H1 (cell line): ENCODE measurements at regions of chr5 and their contacts with region 1.

Region 1: DNA sequence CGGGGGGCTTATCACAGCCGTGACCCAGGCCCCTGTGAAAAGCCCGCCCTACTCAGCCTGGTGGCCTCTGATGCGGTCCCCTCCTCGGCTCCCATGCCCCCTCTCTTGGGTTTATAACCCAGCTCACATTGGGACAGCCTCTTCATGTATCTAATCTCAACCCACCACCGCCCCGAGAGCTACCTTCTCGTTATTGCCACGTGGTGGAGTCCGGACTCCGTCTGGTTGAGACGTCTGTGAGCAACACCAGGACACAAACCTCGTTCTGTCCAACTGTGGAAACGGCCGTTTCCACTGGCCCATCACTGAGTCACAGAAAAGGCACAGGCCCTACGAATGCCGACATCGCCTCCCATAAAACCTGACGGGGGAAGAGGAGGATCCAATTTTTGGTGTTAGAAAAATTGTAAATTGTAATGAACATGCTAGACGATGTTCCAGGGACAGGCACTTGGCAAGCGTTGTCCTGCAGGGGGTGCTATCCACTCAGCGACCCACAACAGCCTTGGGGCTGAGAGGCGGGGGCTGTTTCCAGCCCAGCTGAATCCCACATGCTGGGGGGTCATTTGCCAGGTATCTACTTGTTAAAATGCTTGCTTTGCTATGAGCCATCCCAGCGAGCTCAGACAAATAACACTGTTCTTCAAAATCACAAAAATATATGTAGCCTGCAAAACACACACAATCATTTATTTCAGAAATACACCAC is 37.3 kb upstream of the N4BP3 start:
- DNase-seq: peak; percentile 50 to 92
- H3K4me3 ChIP-seq: peak overlapping the region in 1 of 4 experiments; percentile 33; a peak in 2 of 8 replicates
- H3K27ac ChIP-seq: no peak overlapping the region
- H3K4me1 ChIP-seq: peaks cover 0 to 12% (median 4%) of the 10 kb centered on the region in 4 experiments; a peak in 2 of 7 replicates
- H3K27me3 ChIP-seq: peaks cover 0 to 11% (median 6%) of the 10 kb centered on the region in 4 experiments; a peak in 3 of 7 replicates
- CTCF ChIP-seq: peak in 2 of 3 experiments; percentile 87 to 93; a peak in 3 of 4 replicates
- EP300 ChIP-seq: no peak
- POLR2A ChIP-seq: no peak
- RAD21 ChIP-seq: peak; percentile 94 to 96

Region 2: GRCh38 chr5:178058321-178059012 is 17.5 kb before region 1 on chr5:
- CTCF ChIA-PET with region 1: interaction called, 19 read pairs
- POLR2A ChIA-PET with region 1: no interaction called
- DNase-seq: no peak
- H3K4me3 ChIP-seq: no peak overlapping the region
- H3K27ac ChIP-seq: no peak overlapping the region
- H3K4me1 ChIP-seq: no peaks in the 10 kb centered on the region
- H3K27me3 ChIP-seq: no peaks in the 10 kb centered on the region
- CTCF ChIP-seq: no peak
- EP300 ChIP-seq: no peak
- POLR2A ChIP-seq: no peak
- RAD21 ChIP-seq: no peak

Region 3: DNA sequence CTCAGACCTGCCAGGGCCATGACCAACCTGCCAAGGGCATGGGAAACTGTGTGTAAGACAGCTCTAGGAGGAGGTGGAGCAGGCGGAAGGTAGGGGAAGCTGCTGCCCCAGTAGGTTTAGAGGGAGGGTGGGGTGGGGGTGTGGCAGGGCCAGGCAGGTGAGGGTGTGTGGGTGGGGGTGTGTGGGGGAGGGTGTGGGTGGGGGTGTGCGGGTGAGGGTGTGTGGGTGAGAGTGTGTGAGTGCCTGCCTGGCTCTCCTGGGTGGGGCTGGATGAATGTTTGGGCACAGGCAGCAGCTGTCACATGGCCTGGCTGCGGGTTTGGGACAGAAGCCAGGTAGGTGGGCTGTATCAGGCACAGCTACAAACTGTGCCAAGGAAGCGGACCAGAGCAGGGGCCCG is 28.5 kb after region 1 on chr5:
- CTCF ChIA-PET with region 1: interaction called, 83 read pairs
- POLR2A ChIA-PET with region 1: interaction called, 3 read pairs
- DNase-seq: no peak
- H3K4me3 ChIP-seq: no peak overlapping the region
- H3K27ac ChIP-seq: no peak overlapping the region
- H3K4me1 ChIP-seq: 0 out of 7 replicates have a peak, but pooled peaks cover 0 to 7% (median 1%) of the 10 kb centered on the region in 4 experiments
- H3K27me3 ChIP-seq: no peaks in the 10 kb centered on the region
- CTCF ChIP-seq: no peak
- EP300 ChIP-seq: no peak
- POLR2A ChIP-seq: no peak
- RAD21 ChIP-seq: no peak

Region 4: DNA sequence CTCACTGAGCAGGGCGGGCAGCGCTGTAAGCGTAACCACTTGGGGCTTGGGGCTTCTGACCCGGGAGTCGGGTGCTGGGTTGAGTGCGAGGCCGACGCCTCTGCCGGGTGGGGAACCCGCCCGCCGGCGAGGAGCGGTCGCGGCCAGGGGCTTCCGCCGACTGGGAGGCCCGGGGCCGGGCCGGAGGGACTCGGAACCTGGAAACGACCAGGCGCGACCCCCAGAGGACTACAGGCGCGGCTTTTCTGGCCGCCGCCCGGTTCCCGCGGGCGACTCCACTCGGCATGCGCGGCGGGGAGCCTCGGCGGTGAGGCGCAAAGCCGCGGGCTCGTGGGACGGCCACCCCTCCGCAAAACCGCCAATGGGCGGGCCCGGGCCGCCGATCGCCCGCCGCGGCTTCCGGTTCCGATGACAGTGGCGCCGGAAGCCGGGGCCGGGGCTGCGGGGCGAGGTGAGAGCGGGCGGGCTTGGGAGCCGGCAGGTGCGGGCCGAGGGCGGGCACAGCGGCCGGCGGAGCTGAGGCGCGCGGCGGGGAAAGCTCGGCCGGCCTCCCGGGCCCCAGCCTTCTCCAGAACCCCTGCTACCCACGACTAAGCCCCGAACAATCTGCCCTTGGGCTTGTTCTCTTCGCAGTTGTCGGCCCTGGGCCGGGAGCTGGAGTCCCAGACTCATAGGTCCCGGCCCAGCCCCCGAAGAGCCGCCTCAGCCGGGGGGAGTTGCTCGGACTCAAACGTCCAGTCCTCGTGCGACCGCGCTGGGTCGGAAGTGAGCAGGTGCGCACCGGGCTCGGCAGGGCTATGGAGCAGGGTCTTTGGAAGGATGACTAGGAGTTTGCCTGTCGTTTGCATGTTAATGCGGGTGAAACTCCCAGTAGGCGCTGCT is 54.9 kb after region 1 on chr5 and contains the start of gene RMND5B:
- CTCF ChIA-PET with region 1: interaction called, 189 read pairs
- POLR2A ChIA-PET with region 1: interaction called, 115 read pairs
- DNase-seq: peak in 1 of 2 experiments; percentile 87
- H3K4me3 ChIP-seq: peak within 1 kb of the TSS; percentile 72 to 95 (median 78)
- H3K27ac ChIP-seq: peak within 1 kb of the TSS; percentile 86
- H3K4me1 ChIP-seq: peaks cover 4 to 17% (median 13%) of the 10 kb centered on the region in 4 experiments
- H3K27me3 ChIP-seq: no peaks in the 10 kb centered on the region
- CTCF ChIP-seq: peak in 1 of 3 experiments; percentile 11; a peak in 1 of 4 replicates
- EP300 ChIP-seq: peak in 1 of 2 experiments; percentile 95; a peak in 2 of 3 replicates
- POLR2A ChIP-seq: peak in 1 of 2 experiments; percentile 79; a peak in 2 of 3 replicates
- RAD21 ChIP-seq: no peak; a peak in 1 of 4 replicates
- total RNA-seq, gene RMND5B: 74.6 and 75.9 TPM in 2 replicates

Region 5: GRCh38 chr5:178146020-178146820 is 70.2 kb after region 1 on chr5:
- CTCF ChIA-PET with region 1: interaction called, 515 read pairs
- POLR2A ChIA-PET with region 1: interaction called, 50 read pairs
- DNase-seq: peak; percentile 71 to 89
- H3K4me3 ChIP-seq: no peak overlapping the region
- H3K27ac ChIP-seq: no peak overlapping the region
- H3K4me1 ChIP-seq: peaks cover 0 to 2% (median 0%) of the 10 kb centered on the region in 4 experiments; a peak in 3 of 7 replicates
- H3K27me3 ChIP-seq: no peaks in the 10 kb centered on the region
- CTCF ChIP-seq: peak in 2 of 3 experiments; percentile 96 to 97; a peak in 3 of 4 replicates
- EP300 ChIP-seq: no peak
- POLR2A ChIP-seq: no peak; a peak in 1 of 3 replicates
- RAD21 ChIP-seq: peak; percentile 83 to 86

Region 6: DNA sequence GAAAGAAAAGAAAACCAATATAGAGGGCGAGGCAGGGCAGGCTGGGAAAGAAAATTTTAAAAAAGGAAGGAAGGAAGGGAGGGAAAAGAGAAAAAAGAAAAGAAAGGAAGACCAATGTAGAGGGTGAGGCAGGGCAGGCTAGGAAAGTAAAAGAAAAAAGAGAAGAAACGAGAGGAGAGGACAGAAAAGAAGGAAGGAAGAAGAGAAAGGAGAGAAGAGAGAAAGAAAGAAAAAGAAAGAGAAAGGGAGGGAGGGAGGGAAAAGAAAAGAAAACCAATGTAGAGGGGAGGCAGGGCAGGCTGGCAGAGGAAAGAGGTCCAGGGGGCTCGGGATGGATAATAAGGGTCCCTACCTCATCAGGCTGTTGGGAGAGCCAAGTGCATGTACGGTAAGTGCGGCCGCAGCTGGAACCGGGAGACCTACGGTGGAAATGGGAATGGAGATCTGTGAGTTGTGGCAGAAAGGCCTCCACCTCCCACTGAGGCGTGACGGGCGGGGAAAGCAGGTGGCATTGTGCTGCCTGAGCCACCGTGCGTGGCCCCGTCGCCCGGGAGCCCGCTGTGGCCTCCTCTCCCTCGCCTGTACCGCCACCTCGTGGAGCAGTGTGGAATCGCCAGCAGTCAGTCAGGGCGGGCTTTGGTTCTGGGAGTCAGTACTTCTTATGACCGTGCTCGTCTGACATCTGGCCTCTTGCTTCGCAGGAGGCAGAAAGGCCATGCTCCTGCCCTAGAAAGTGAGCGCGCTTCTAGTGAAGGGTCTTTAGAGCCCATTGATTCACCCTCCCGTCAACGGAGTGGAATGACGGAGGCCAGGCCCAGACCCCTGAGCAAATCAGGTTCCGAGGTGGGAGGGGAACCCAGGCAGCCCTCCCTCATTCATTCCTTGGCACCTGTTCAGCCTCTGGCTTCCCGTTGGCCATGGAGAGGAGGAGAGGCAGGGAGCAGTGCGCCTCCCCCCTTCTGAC is 88.1 kb after region 1 on chr5:
- CTCF ChIA-PET with region 1: interaction called, 515 read pairs
- POLR2A ChIA-PET with region 1: interaction called, 5 read pairs
- DNase-seq: peak in 1 of 2 experiments; percentile 100
- H3K4me3 ChIP-seq: peak overlapping the region in 3 of 4 experiments; percentile 37 to 49 (median 48); a peak in 6 of 8 replicates
- H3K27ac ChIP-seq: no peak overlapping the region
- H3K4me1 ChIP-seq: peaks cover 0 to 6% (median 3%) of the 10 kb centered on the region in 4 experiments; a peak in 3 of 7 replicates
- H3K27me3 ChIP-seq: peaks cover 0 to 4% (median 2%) of the 10 kb centered on the region in 4 experiments; a peak in 1 of 7 replicates
- CTCF ChIP-seq: peak; percentile 94 to 100 (median 100)
- EP300 ChIP-seq: no peak
- POLR2A ChIP-seq: 0 out of 3 replicates have a peak, but pooled peaks of 1 of the 2 experiments have one; percentile 22
- RAD21 ChIP-seq: peak; percentile 96 to 98